ENCODE measurements at regions of chr18 and their contacts with region 1.

Region 1: DNA sequence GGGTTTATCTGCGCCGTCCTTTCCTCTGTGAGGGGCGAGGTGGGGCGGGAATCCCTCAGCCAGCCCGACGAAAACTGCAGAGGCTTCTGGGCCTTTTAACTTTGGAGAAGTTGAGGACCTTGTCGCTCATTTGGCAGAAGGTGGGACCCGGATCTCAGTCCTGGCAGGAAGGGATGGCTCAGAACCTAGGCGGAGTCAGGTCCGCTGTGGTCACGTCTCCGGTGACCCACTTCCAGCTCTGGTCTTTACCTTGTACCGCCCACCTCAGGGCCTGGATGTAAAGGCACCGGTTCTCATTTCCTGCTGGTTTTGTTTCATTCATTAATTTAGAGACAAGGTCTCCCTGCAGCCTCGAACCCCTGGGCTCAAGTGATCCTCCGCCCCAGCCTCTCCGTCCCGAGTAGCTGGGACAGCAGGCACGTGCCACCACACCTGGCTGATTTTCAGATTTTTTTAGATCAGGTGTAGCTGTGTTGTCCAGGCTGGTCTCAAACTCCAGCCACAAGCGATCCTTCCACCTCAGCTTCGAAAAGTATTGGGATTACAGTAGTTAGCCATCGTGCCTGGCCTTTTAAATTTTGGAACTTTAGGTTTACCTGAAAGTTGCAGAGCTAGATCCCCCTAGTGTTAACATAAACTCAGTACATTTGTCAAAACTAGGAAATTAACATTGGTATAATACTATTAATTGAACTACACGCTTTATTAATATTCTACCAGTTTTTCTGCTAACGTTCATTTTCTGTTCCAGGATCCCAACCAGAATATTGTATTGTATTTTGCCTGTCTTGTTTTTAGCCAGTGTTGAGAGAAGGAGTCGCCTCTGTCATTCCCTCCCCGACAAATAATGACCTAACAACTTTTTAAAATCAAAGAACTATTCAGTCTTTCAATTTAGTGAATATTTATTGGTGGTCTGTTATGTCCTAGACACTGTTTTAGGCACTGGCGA is 852 bp downstream of the POLI start:
- DNase-seq: peak; percentile 87
- ATAC-seq: peak; percentile 57
- H3K4me3 Mint-ChIP-seq: peak overlapping the region; percentile 81
- H3K27ac Mint-ChIP-seq: peak overlapping the region; percentile 99
- H3K4me1 Mint-ChIP-seq: peaks cover 45% of the 10 kb centered on the region
- H3K27me3 Mint-ChIP-seq: no peaks in the 10 kb centered on the region

Region 2: GRCh38 chr18:54284981-54285785 is 15.0 kb after region 1 on chr18:
- CTCF ChIA-PET with region 1: interaction called, 20 read pairs
- DNase-seq: peak; percentile 92
- ATAC-seq: peak; percentile 100
- H3K4me3 Mint-ChIP-seq: peak overlapping the region; percentile 29
- H3K27ac Mint-ChIP-seq: peak overlapping the region; percentile 85
- H3K4me1 Mint-ChIP-seq: peaks cover 29% of the 10 kb centered on the region
- H3K27me3 Mint-ChIP-seq: no peaks in the 10 kb centered on the region

Region 3: DNA sequence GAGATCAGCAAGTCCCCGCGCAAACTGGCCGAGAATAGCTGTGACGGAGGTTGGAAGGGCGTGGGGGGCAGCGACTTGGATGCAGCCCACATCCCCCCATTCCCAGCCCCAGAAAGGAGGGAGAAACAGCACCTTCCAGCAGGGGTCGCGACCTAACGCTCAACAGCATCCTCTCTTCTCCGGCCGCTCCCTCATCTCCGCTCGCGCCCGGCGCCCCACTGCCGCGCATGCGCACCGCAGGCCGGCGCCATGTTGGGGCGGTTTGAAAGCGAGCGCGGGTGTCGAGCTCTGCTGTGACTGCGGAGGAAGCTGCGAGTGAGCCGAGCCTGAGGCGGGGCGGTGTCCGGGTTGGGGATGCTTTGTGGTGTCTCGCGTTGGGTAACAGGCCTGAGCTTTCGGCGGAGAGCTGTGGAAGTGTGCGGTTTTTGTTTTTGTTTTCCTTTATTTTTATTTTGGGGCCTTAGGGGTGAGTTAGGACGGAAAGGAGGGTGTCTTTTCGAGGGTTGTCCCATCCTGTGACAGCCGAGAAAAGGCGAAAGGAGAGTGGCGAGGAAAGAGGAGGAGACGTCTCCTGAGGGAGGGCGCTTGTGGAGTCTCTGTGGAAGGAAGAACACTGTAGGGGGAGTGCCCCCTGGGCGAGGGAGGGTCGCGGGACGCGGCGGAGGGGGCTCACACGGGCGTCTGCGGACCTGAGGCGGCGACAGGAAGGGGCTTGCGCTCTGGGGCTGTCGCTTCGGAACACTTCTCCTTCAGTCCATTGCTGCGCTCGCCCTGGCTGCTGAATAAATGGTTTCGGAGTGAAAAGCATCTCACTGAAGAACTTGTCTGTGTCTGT is 87.7 kb after region 1 on chr18 and contains the starts of genes C18orf54 and STARD6:
- CTCF ChIA-PET with region 1: interaction called, 14 read pairs
- DNase-seq: peak; percentile 94
- ATAC-seq: peak; percentile 96
- H3K4me3 Mint-ChIP-seq: peak within 1 kb of the TSS; percentile 95
- H3K27ac Mint-ChIP-seq: peak within 1 kb of the TSS; percentile 97
- H3K4me1 Mint-ChIP-seq: peaks cover 25% of the 10 kb centered on the region
- H3K27me3 Mint-ChIP-seq: no peaks in the 10 kb centered on the region
- total RNA-seq, gene C18orf54: 13.9 to 16.4 TPM
- total RNA-seq, gene STARD6: 0.20 to 0.61 TPM

Region 4: GRCh38 chr18:54585743-54586142 is 315.6 kb after region 1 on chr18:
- CTCF ChIA-PET with region 1: no interaction called
- DNase-seq: no peak
- ATAC-seq: no peak
- H3K4me3 Mint-ChIP-seq: no peak overlapping the region
- H3K27ac Mint-ChIP-seq: no peak overlapping the region
- H3K4me1 Mint-ChIP-seq: no peaks in the 10 kb centered on the region
- H3K27me3 Mint-ChIP-seq: peaks cover 15% of the 10 kb centered on the region

Measured in activated CD8-positive, alpha-beta memory T cell treated with anti-CD3 and anti-CD28 coated beads, Interleukin-2, amount 10 ng/mL, durations not matched to agents 7 days and 5 days (primary cell).